ENCODE measurements at regions of chr5 and their contacts with region 1.

Region 1: GRCh38 chr5:131338051-131338453 is 74.2 kb downstream of the CDC42SE2 start:
- DNase-seq: no peak

Region 2: GRCh38 chr5:131224387-131225201 is 113.5 kb before region 1 on chr5:
- intact Hi-C with region 1: loop called in 1 of 2 experiments (anchors 1 kb)
- DNase-seq: no peak

Region 3: DNA sequence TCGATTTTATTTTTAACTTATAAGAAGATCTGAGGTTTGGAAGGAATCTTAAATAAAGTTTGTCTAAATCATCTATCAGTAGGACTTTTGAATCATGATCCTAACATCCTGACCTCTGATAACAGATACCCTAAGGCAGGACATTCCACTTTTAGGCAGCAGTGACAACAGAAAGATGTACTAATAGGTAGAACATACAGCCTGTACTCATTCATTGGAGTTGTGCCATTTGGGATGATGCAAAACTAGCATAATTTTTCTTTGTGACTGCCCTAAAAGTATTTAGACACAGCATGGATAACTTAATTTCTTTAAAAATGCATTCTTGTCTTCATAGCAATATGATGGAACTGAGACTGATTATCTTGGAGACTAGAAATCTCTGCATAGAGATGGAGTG is 34.5 kb before region 1 on chr5:
- intact Hi-C with region 1: no loop called
- DNase-seq: no peak